Natural killer cell (primary cell): ENCODE measurements at regions of chr17 and their contacts with region 1.

Region 1: GRCh38 chr17:7004398-7005253 is 7.8 kb upstream of the RNASEK start:
- DNase-seq: peak in 1 of 2 donors; percentile 86
- ATAC-seq: peak; percentile 93 to 98 (median 95)
- H3K4me3 ChIP-seq: no peak overlapping the region
- H3K4me3 Mint-ChIP-seq: no peak overlapping the region
- H3K27ac ChIP-seq: no peak overlapping the region
- H3K27ac Mint-ChIP-seq: peak overlapping the region; percentile 35 to 57
- H3K4me1 ChIP-seq: peaks cover under 1% of the 10 kb centered on the region
- H3K4me1 Mint-ChIP-seq: peaks cover 31 to 34% of the 10 kb centered on the region in 2 donors
- H3K27me3 ChIP-seq: no peaks in the 10 kb centered on the region
- H3K27me3 Mint-ChIP-seq: no peaks in the 10 kb centered on the region
- CTCF ChIP-seq: peak; percentile 85

Region 2: GRCh38 chr17:6473128-6473767 is 531.4 kb before region 1 on chr17:
- intact Hi-C with region 1: loop called (anchors 10 kb)
- DNase-seq: peak; percentile 64 to 80
- ATAC-seq: peak; percentile 58 to 85 (median 81)
- H3K4me3 ChIP-seq: no peak overlapping the region
- H3K4me3 Mint-ChIP-seq: no peak overlapping the region
- H3K27ac ChIP-seq: no peak overlapping the region
- H3K27ac Mint-ChIP-seq: peak overlapping the region in 1 of 2 donors; percentile 53
- H3K4me1 ChIP-seq: no peaks in the 10 kb centered on the region
- H3K4me1 Mint-ChIP-seq: peaks cover 5 to 6% of the 10 kb centered on the region in 2 donors
- H3K27me3 ChIP-seq: no peaks in the 10 kb centered on the region
- H3K27me3 Mint-ChIP-seq: peaks cover 0 to 18% of the 10 kb centered on the region in 2 donors
- CTCF ChIP-seq: peak; percentile 99

Region 3: DNA sequence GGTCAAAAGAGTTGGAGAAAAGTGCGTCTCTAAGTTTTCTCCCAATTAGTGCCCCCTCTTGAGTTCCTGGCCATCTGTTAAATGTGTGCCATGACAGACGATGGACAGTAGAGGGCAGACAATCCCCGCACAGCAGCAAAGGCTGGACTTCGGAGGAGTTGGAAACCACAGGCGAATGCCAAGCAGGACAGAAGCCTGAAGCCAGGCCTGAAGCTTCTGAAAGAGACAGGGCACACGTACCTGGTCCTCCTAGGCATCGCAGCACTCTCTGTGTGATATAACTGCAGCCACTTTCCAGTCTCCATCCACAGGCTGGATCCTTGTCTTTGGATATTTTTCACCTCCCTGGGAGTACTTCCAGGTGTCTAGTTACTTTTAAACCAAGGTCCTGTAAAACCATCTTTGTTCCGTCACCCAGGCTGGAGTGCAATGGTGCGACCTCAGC is 338.5 kb before region 1 on chr17:
- intact Hi-C with region 1: loop called (anchors 2 kb)
- DNase-seq: peak; percentile 39 to 71
- ATAC-seq: peak; percentile 74 to 92 (median 90)
- H3K4me3 ChIP-seq: no peak overlapping the region
- H3K4me3 Mint-ChIP-seq: no peak overlapping the region
- H3K27ac ChIP-seq: no peak overlapping the region
- H3K27ac Mint-ChIP-seq: no peak overlapping the region
- H3K4me1 ChIP-seq: peaks cover 7% of the 10 kb centered on the region
- H3K4me1 Mint-ChIP-seq: peaks cover 0 to under 1% of the 10 kb centered on the region in 2 donors
- H3K27me3 ChIP-seq: peaks cover 5% of the 10 kb centered on the region
- H3K27me3 Mint-ChIP-seq: peaks cover 34 to 37% of the 10 kb centered on the region in 2 donors
- CTCF ChIP-seq: peak; percentile 81

Region 4: DNA sequence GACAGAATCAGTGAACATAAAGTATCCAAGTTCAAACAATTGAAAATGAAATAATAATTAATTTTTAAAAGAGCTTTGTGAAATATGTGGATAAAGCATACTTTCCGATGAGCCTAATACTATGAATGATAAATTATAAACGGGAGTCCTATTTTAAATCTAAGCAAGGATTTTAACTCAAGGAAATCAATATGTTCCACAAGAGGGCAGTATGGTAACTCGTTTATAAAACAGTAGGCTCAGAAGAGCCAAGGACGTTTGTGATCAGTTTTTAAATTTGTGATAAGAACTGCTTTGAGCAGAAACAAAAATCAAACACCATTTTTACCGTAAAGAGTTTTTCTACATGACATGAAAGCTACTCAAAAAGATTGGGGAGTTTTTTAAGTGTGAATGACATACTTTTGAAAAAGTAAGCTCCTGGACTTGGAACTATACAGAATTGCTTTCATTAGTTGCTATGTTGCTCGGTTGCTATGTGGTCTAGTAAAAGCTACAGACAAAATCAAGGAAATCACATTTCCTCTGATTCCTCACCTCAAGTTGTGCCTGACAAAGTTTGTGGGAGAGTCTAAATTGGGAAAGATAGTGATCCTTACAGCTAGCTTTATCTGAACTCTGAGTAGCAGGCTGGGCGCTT is 161.3 kb before region 1 on chr17:
- intact Hi-C with region 1: loop called (anchors 1 kb)
- DNase-seq: peak in 1 of 2 donors; percentile 72
- ATAC-seq: peak; percentile 55 to 62 (median 61)
- H3K4me3 ChIP-seq: no peak overlapping the region
- H3K4me3 Mint-ChIP-seq: no peak overlapping the region
- H3K27ac ChIP-seq: no peak overlapping the region
- H3K27ac Mint-ChIP-seq: no peak overlapping the region
- H3K4me1 ChIP-seq: peaks cover 2% of the 10 kb centered on the region
- H3K4me1 Mint-ChIP-seq: no peaks in the 10 kb centered on the region
- H3K27me3 ChIP-seq: peaks cover 2% of the 10 kb centered on the region
- H3K27me3 Mint-ChIP-seq: peaks cover 27 to 38% of the 10 kb centered on the region in 2 donors
- CTCF ChIP-seq: peak; percentile 66

Region 5: DNA sequence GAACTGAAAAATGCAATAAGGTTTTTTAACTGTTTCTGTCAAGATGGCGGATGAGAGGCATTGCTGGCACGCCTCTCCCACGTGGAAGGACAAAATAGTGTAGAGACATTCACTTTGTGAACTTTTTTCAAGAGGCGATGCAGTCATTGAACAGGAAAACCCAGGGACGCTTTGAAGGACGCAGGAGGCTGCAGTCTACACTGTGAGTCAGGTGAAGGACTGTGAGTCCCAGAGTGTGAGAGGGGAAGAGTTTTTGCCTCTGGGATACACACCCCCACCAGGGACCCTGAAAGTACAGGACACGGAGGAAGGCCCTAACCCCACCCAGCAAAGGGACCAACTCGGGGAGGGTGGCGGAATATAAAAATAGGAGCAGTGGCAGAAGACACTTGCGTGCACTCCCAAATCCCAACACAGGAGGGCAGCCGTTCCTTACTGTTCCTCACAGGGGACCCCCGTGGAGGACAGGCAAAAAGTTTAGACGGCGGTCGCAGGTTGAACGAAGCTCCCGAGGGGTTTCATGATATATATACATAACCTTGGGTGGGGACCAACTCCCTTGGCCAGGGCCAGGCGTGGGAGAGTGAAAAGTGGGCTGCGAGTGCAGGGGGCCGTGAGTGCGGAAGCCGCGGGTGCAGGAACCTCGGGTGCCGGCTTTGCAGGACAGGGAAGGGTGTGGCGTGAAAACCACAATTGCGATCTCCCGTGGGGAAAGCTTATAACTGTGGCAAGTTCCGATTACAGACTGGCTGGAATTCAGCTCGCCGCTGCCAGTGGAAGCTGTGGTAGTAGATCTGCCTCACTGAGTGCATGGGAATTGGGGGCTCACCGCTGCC is 90.8 kb before region 1 on chr17:
- intact Hi-C with region 1: loop called (anchors 1 kb)
- DNase-seq: peak; percentile 59 to 84
- ATAC-seq: peak; percentile 78 to 91 (median 90)
- H3K4me3 ChIP-seq: no peak overlapping the region
- H3K4me3 Mint-ChIP-seq: peak overlapping the region; percentile 94
- H3K27ac ChIP-seq: no peak overlapping the region
- H3K27ac Mint-ChIP-seq: peak overlapping the region in 1 of 2 donors; percentile 62
- H3K4me1 ChIP-seq: peaks cover 12% of the 10 kb centered on the region
- H3K4me1 Mint-ChIP-seq: peaks cover 14 to 17% of the 10 kb centered on the region in 2 donors
- H3K27me3 ChIP-seq: no peaks in the 10 kb centered on the region
- H3K27me3 Mint-ChIP-seq: peaks cover 25 to 40% of the 10 kb centered on the region in 2 donors
- CTCF ChIP-seq: peak; percentile 66

Region 6: DNA sequence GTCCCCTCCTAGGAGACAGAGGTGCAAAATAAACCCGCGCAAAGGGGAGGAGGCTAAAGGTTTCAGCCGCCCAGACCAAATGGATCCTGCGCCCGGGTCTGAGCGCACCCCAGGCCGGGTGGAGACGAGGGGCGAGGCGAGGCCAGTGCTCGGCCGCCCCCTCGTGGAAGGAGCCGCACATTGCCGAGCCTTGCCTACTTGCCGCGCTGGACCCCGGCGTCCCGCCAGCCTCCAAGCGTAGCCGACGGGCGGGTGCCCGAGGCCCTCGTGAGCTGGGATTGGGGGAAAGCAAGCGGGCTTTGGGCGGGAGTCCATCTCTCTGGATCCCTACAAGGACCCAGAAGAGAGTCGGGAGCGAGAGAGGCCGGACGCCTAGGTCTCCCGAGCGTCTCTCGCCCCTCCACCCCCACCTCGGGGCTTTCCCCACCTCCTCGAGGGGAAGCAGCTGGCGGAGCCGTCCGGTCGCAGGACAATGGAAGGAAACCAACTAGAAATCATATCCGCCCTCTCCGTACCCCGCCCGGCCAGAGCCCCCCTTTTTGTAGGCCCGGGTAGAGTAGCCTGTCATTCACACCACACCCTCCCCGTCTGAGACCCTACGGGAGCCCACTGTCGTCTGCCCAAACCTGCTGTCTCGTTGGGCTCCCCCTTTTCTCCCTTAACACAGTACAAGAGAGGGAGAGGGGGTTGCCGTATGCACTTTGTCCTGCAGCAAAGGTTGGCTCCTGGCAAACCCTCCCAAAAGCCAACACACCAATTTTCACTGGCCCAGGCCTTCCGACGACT is 17.6 kb after region 1 on chr17:
- intact Hi-C with region 1: loop called (anchors 2 kb)
- DNase-seq: peak; percentile 85 to 88
- ATAC-seq: peak; percentile 68 to 85 (median 69)
- H3K4me3 ChIP-seq: peak overlapping the region; percentile 39
- H3K4me3 Mint-ChIP-seq: peak overlapping the region; percentile 87
- H3K27ac ChIP-seq: peak overlapping the region; percentile 54
- H3K27ac Mint-ChIP-seq: peak overlapping the region; percentile 93 to 96
- H3K4me1 ChIP-seq: peaks cover 68% of the 10 kb centered on the region
- H3K4me1 Mint-ChIP-seq: peaks cover 39 to 76% of the 10 kb centered on the region in 2 donors
- H3K27me3 ChIP-seq: no peaks in the 10 kb centered on the region
- H3K27me3 Mint-ChIP-seq: no peaks in the 10 kb centered on the region
- CTCF ChIP-seq: peak; percentile 92